Naive thymus-derived CD4-positive, alpha-beta T cell (primary cell): ENCODE measurements at regions of chr2 and their contacts with region 1.

Region 1: DNA sequence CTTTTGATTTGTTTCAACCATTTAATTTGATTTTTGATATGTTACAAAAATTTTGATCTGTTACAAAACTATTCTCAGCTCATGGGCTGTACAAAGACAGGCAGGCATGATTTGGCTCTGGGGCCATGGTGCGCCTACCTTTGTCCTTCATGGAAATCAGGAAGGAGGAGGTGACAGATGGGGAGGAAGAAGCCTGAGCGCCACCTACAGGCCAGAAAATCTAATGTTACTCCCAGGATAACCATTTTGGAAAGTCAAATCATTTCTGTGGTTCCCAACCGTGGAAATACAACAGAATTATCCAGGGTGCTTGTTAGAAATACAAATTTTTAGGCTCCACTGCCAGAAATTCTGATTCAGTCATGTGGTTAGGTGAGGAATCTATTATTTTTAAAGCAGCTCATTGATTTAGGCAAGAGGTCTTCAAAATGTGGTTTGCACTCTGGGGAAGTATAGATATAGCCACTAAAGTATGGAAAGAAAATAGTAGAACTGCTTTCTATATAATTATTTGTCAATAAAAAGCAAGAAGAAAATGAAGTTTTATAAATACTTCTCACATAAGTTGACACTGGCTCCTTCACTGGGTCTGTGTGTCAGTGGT is 93.9 kb downstream of the EVA1A start:
- DNase-seq: peak in 3 of 9 donors; percentile 1 to 7 (median 4)
- ATAC-seq: no peak
- H3K4me3 ChIP-seq: no peak overlapping the region
- H3K4me3 Mint-ChIP-seq: no peak overlapping the region
- H3K27ac ChIP-seq: no peak overlapping the region
- H3K27ac Mint-ChIP-seq: no peak overlapping the region
- H3K4me1 ChIP-seq: no peaks in the 10 kb centered on the region
- H3K4me1 Mint-ChIP-seq: no peaks in the 10 kb centered on the region
- H3K27me3 ChIP-seq: no peaks in the 10 kb centered on the region
- H3K27me3 Mint-ChIP-seq: peaks cover 12 to 37% (median 22%) of the 10 kb centered on the region in 5 donors

Region 2: GRCh38 chr2:75199428-75200011 is 267.3 kb before region 1 on chr2 and contains the start of gene TACR1:
- CTCF ChIA-PET with region 1: no interaction called
- POLR2A ChIA-PET with region 1: no interaction called
- intact Hi-C with region 1: loop called in 1 of 2 experiments (anchors 2 kb)
- DNase-seq: peak; percentile 18 to 56 (median 47)
- ATAC-seq: peak; percentile 72
- H3K4me3 ChIP-seq: no peak within 1 kb of the TSS
- H3K4me3 Mint-ChIP-seq: peak within 1 kb of the TSS in 9 of 10 donors; percentile 69 to 91 (median 83)
- H3K27ac ChIP-seq: no peak within 1 kb of the TSS
- H3K27ac Mint-ChIP-seq: no peak within 1 kb of the TSS
- H3K4me1 ChIP-seq: peaks cover 0 to 10% of the 10 kb centered on the region in 2 donors
- H3K4me1 Mint-ChIP-seq: peaks cover 0 to 25% (median 7%) of the 10 kb centered on the region in 7 donors
- H3K27me3 ChIP-seq: peaks cover 0 to 7% of the 10 kb centered on the region in 2 donors
- H3K27me3 Mint-ChIP-seq: peaks cover 70 to 77% (median 75%) of the 10 kb centered on the region in 5 donors
- total RNA-seq, gene TACR1: 0.24 TPM in 1 of 5 experiments, not detected in the others

Region 3: DNA sequence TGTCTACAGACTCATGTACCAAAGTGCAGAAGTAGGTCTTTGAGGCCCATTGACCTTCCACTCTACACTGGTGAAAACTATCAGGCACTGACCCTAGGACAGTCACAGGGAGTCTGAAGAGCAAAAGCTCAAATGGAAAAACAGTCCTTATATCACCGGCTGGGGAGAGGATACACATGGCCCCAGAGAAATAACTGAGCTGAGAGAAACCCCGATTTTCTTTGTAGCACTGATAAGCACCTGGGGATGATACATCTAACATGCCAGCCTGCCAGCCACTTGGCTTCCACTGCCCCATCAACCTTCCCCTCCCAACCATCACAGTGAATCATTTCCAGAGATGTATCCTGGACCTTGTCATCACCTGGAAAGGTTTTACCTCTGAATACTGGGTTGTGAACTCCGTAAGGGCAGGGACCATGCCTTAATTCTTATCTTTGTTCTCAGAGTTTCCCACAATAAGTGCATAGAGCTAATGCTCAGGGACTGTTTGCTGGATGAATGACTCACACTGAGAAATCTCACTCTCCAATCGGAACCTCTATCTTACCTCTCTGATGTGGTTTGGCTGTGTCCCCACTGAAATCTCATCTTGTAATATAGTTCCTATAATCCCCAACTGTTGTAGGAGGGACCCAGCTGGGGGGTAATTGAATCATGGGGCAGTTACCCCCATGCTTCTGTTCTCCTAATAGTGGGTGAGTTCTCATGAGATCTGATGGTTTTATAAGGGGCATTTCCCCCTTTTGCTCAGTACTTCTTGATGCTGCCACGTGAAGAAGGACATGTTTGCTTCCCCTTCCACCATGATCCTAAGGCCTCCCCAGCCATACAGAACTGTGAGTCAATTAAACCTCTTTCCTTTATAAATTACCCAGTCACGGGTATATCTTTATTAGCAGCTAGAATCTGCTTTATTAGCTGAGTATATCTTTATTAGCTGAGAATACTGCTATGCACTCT is 56.8 kb after region 1 on chr2:
- CTCF ChIA-PET with region 1: no interaction called
- POLR2A ChIA-PET with region 1: no interaction called
- intact Hi-C with region 1: no loop called
- DNase-seq: no peak
- ATAC-seq: no peak
- H3K4me3 ChIP-seq: no peak overlapping the region
- H3K4me3 Mint-ChIP-seq: no peak overlapping the region
- H3K27ac ChIP-seq: no peak overlapping the region
- H3K27ac Mint-ChIP-seq: no peak overlapping the region
- H3K4me1 ChIP-seq: no peaks in the 10 kb centered on the region
- H3K4me1 Mint-ChIP-seq: peaks cover 0 to 3% (median 0%) of the 10 kb centered on the region in 7 donors
- H3K27me3 ChIP-seq: no peaks in the 10 kb centered on the region
- H3K27me3 Mint-ChIP-seq: peaks cover 3 to 20% (median 13%) of the 10 kb centered on the region in 5 donors

Region 4: GRCh38 chr2:75608684-75609333 is 142.0 kb after region 1 on chr2:
- CTCF ChIA-PET with region 1: no interaction called
- POLR2A ChIA-PET with region 1: no interaction called
- intact Hi-C with region 1: loop called in 1 of 2 experiments (anchors 2 kb)
- DNase-seq: peak; percentile 21 to 57 (median 49)
- ATAC-seq: peak; percentile 84
- H3K4me3 ChIP-seq: no peak overlapping the region
- H3K4me3 Mint-ChIP-seq: peak overlapping the region in 4 of 10 donors; percentile 28 to 45 (median 38)
- H3K27ac ChIP-seq: no peak overlapping the region
- H3K27ac Mint-ChIP-seq: no peak overlapping the region
- H3K4me1 ChIP-seq: no peaks in the 10 kb centered on the region
- H3K4me1 Mint-ChIP-seq: peaks cover 0 to 1% (median 0%) of the 10 kb centered on the region in 7 donors
- H3K27me3 ChIP-seq: peaks cover 0 to 4% of the 10 kb centered on the region in 2 donors
- H3K27me3 Mint-ChIP-seq: peaks cover 46 to 74% (median 65%) of the 10 kb centered on the region in 5 donors

Region 5: GRCh38 chr2:75627895-75628504 is 161.2 kb after region 1 on chr2:
- CTCF ChIA-PET with region 1: interaction called, 3 read pairs
- POLR2A ChIA-PET with region 1: no interaction called
- intact Hi-C with region 1: loop called in 1 of 2 experiments (anchors 5 kb)
- DNase-seq: peak in 7 of 9 donors; percentile 20 to 50 (median 38)
- ATAC-seq: peak; percentile 79
- H3K4me3 ChIP-seq: no peak overlapping the region
- H3K4me3 Mint-ChIP-seq: no peak overlapping the region
- H3K27ac ChIP-seq: no peak overlapping the region
- H3K27ac Mint-ChIP-seq: no peak overlapping the region
- H3K4me1 ChIP-seq: no peaks in the 10 kb centered on the region
- H3K4me1 Mint-ChIP-seq: no peaks in the 10 kb centered on the region
- H3K27me3 ChIP-seq: no peaks in the 10 kb centered on the region
- H3K27me3 Mint-ChIP-seq: peaks cover 16 to 38% (median 29%) of the 10 kb centered on the region in 5 donors

Region 6: GRCh38 chr2:75807992-75808391 is 341.2 kb after region 1 on chr2:
- CTCF ChIA-PET with region 1: no interaction called
- POLR2A ChIA-PET with region 1: no interaction called
- intact Hi-C with region 1: no loop called
- DNase-seq: no peak
- ATAC-seq: no peak
- H3K4me3 ChIP-seq: no peak overlapping the region
- H3K4me3 Mint-ChIP-seq: no peak overlapping the region
- H3K27ac ChIP-seq: no peak overlapping the region
- H3K27ac Mint-ChIP-seq: no peak overlapping the region
- H3K4me1 ChIP-seq: no peaks in the 10 kb centered on the region
- H3K4me1 Mint-ChIP-seq: no peaks in the 10 kb centered on the region
- H3K27me3 ChIP-seq: no peaks in the 10 kb centered on the region
- H3K27me3 Mint-ChIP-seq: peaks cover 0 to 18% (median 7%) of the 10 kb centered on the region in 5 donors

Region 7: GRCh38 chr2:75928093-75928492 is 461.3 kb after region 1 on chr2:
- CTCF ChIA-PET with region 1: no interaction called
- POLR2A ChIA-PET with region 1: no interaction called
- intact Hi-C with region 1: no loop called
- DNase-seq: no peak
- ATAC-seq: no peak
- H3K4me3 ChIP-seq: no peak overlapping the region
- H3K4me3 Mint-ChIP-seq: no peak overlapping the region
- H3K27ac ChIP-seq: no peak overlapping the region
- H3K27ac Mint-ChIP-seq: no peak overlapping the region
- H3K4me1 ChIP-seq: no peaks in the 10 kb centered on the region
- H3K4me1 Mint-ChIP-seq: no peaks in the 10 kb centered on the region
- H3K27me3 ChIP-seq: no peaks in the 10 kb centered on the region
- H3K27me3 Mint-ChIP-seq: no peaks in the 10 kb centered on the region